Activated T-helper 2 cell treated with anti-CD3 and anti-CD28 coated beads, Interferon-gamma antibody, Interleukin-2, Interleukin-4, amounts not matched to agents 10 μg/mL and 5 μg/mL and 100 μg/mL, durations not matched to agents 14 hours and 24 hours and 36 hours (primary cell): ENCODE measurements at regions of chr2 and their contacts with region 1.

Region 1: DNA sequence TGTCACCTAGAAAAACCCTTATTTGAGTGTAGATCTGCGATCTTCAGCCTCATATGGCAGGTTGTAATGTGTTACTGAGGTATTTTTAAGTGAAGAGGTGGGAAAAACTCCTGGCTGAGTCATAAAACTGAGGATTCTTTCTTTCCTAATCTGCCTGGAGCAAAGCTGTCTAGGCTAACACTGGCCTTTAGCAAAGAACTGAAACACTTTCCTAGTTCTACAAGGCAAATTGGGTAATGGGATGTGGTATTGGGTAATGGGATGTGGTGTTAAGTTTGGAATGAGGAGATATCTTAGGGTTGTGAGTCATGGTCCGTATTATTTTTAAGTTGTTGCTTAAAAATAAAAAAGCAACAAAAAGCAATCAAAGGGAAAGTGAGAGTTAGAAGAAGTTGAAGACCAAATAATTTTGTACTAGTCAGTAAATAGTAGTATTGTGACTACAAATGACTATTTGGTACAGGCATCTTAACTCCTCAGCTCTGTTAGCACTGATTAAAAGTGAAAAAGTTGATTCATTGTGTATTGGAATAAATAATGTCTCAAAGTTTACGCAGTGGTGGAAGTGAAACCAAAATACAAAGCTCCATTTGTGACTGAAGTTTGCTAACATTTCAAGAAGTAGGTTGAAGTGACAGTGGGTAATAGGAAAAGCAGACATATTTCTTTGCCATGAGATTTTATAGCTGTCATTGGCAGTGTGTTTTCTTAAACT is 216.8 kb downstream of the CAMKMT start:
- DNase-seq: no peak
- H3K4me3 Mint-ChIP-seq: peak overlapping the region; percentile 40
- H3K27ac Mint-ChIP-seq: peak overlapping the region; percentile 74
- H3K4me1 Mint-ChIP-seq: peaks cover 30% of the 10 kb centered on the region
- H3K27me3 Mint-ChIP-seq: no peaks in the 10 kb centered on the region

Region 2: GRCh38 chr2:44616667-44617155 is 38.1 kb after region 1 on chr2:
- intact Hi-C with region 1: loop called (anchors 1 kb)
- DNase-seq: no peak
- H3K4me3 Mint-ChIP-seq: no peak overlapping the region
- H3K27ac Mint-ChIP-seq: no peak overlapping the region
- H3K4me1 Mint-ChIP-seq: peaks cover 12% of the 10 kb centered on the region
- H3K27me3 Mint-ChIP-seq: no peaks in the 10 kb centered on the region

Region 3: GRCh38 chr2:45567974-45568789 is 989.6 kb after region 1 on chr2:
- intact Hi-C with region 1: loop called (anchors 10 kb)
- DNase-seq: no peak
- H3K4me3 Mint-ChIP-seq: peak overlapping the region; percentile 64
- H3K27ac Mint-ChIP-seq: peak overlapping the region; percentile 92
- H3K4me1 Mint-ChIP-seq: peaks cover 36% of the 10 kb centered on the region
- H3K27me3 Mint-ChIP-seq: no peaks in the 10 kb centered on the region